B cell (primary cell): ENCODE measurements at regions of chr5 and their contacts with region 1.

Region 1: DNA sequence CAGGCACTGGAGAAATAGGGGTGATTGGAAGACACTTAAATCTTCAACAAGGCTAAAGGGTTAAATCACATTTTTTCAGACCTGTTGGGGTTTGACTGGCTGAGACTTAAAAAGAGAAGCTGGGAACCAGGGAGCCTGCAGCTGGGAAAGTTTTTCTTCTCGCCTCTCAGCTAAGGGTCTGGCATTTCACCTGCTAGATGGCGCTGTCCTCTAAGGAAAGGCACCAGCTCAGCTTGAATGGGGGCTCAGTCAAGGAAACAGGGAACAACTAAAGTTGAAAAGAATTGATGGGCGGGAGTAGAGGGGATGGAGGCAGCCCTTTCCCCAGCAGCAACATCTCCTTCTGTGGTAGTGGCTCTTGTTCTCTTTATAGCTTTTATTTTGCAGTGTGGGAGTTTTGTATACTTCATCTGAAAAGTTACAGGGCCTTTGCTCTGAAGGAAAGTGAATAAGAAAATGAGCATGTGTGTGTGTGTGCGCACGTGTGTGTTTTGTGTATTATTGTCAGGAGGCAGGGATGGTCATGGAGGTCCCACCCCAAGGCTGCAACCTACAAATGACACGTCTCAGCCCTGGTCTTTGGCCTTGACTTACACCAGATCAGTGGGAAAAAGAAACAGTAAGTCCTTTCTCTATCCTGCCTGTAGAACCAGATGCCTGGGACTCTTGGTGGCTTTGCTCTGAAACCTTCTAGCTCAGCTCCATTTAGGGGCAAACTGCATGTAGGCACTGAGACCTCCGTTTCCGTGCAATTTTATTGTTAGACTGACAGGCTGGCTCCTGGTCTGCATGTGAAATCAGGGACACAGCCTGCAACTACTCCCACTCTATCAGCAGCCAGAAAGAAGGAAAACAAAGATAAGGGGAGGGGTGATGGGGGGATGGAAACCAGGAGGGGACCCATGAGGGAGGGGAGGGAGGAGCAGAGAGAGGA is 316.2 kb upstream of the CLINT1 start:
- DNase-seq: peak; percentile 82
- ATAC-seq: peak; percentile 88
- H3K4me3 ChIP-seq: no peak overlapping the region
- H3K4me3 Mint-ChIP-seq: no peak overlapping the region
- H3K27ac ChIP-seq: no peak overlapping the region
- H3K27ac Mint-ChIP-seq: no peak overlapping the region
- H3K4me1 ChIP-seq: peaks cover 22 to 34% of the 10 kb centered on the region in 2 donors
- H3K4me1 Mint-ChIP-seq: peaks cover 30% of the 10 kb centered on the region
- H3K27me3 ChIP-seq: no peaks in the 10 kb centered on the region
- H3K27me3 Mint-ChIP-seq: no peaks in the 10 kb centered on the region
- CTCF ChIP-seq: peak; percentile 82

Region 2: GRCh38 chr5:158226496-158226895 is 51.3 kb after region 1 on chr5:
- CTCF ChIA-PET with region 1: interaction called, 11 read pairs
- POLR2A ChIA-PET with region 1: no interaction called
- intact Hi-C with region 1: no loop called
- DNase-seq: no peak
- ATAC-seq: no peak
- H3K4me3 ChIP-seq: no peak overlapping the region
- H3K4me3 Mint-ChIP-seq: no peak overlapping the region
- H3K27ac ChIP-seq: no peak overlapping the region
- H3K27ac Mint-ChIP-seq: no peak overlapping the region
- H3K4me1 ChIP-seq: peaks cover 5 to 7% of the 10 kb centered on the region in 2 donors
- H3K4me1 Mint-ChIP-seq: peaks cover 6% of the 10 kb centered on the region
- H3K27me3 ChIP-seq: peaks cover 0 to 2% (median 0%) of the 10 kb centered on the region in 4 experiments
- H3K27me3 Mint-ChIP-seq: no peaks in the 10 kb centered on the region
- CTCF ChIP-seq: no peak

Region 3: GRCh38 chr5:158470764-158471534 is 295.8 kb after region 1 on chr5:
- CTCF ChIA-PET with region 1: no interaction called
- POLR2A ChIA-PET with region 1: no interaction called
- intact Hi-C with region 1: no loop called
- DNase-seq: no peak
- ATAC-seq: no peak
- H3K4me3 ChIP-seq: no peak overlapping the region
- H3K4me3 Mint-ChIP-seq: no peak overlapping the region
- H3K27ac ChIP-seq: no peak overlapping the region
- H3K27ac Mint-ChIP-seq: no peak overlapping the region
- H3K4me1 ChIP-seq: peaks cover 0 to 7% of the 10 kb centered on the region in 2 donors
- H3K4me1 Mint-ChIP-seq: peaks cover 11% of the 10 kb centered on the region
- H3K27me3 ChIP-seq: no peaks in the 10 kb centered on the region
- H3K27me3 Mint-ChIP-seq: no peaks in the 10 kb centered on the region
- CTCF ChIP-seq: no peak

Region 4: GRCh38 chr5:158676642-158677469 is 501.7 kb after region 1 on chr5:
- CTCF ChIA-PET with region 1: interaction called, 16 read pairs
- POLR2A ChIA-PET with region 1: no interaction called
- intact Hi-C with region 1: no loop called
- DNase-seq: peak; percentile 62
- ATAC-seq: peak; percentile 76
- H3K4me3 ChIP-seq: peak overlapping the region; percentile 15 to 48 (median 41)
- H3K4me3 Mint-ChIP-seq: peak overlapping the region; percentile 76
- H3K27ac ChIP-seq: peak overlapping the region; percentile 62 to 89
- H3K27ac Mint-ChIP-seq: peak overlapping the region; percentile 87
- H3K4me1 ChIP-seq: peaks cover 22 to 28% of the 10 kb centered on the region in 2 donors
- H3K4me1 Mint-ChIP-seq: peaks cover 28% of the 10 kb centered on the region
- H3K27me3 ChIP-seq: no peaks in the 10 kb centered on the region
- H3K27me3 Mint-ChIP-seq: no peaks in the 10 kb centered on the region
- CTCF ChIP-seq: peak; percentile 8

Region 5: DNA sequence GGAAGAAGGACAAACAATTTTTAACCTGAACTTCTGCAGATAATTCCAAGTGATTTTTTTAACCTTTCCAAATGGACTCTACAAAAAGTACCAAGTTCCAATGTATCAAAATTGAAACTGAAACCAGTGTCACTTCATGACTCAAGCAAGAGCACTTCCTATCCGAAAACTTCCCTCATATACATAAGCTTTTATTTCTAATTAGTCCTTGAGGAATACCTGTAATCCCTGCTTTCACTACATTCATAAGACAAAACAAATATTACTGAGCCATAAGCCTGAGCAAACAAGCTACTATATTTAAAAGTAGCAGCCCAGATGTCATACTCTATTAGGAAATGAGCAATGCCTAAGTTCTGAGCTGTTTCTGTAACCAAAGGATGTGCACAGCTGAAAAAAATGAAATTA is 700.1 kb after region 1 on chr5:
- CTCF ChIA-PET with region 1: interaction called, 3 read pairs
- POLR2A ChIA-PET with region 1: no interaction called
- intact Hi-C with region 1: loop called (anchors 10 kb)
- DNase-seq: peak; percentile 70
- ATAC-seq: peak; percentile 41
- H3K4me3 ChIP-seq: peak overlapping the region in 2 of 5 experiments; percentile 12 to 34
- H3K4me3 Mint-ChIP-seq: peak overlapping the region; percentile 84
- H3K27ac ChIP-seq: peak overlapping the region; percentile 74 to 80
- H3K27ac Mint-ChIP-seq: peak overlapping the region; percentile 76
- H3K4me1 ChIP-seq: peaks cover 71 to 81% of the 10 kb centered on the region in 2 donors
- H3K4me1 Mint-ChIP-seq: peaks cover 89% of the 10 kb centered on the region
- H3K27me3 ChIP-seq: no peaks in the 10 kb centered on the region
- H3K27me3 Mint-ChIP-seq: no peaks in the 10 kb centered on the region
- CTCF ChIP-seq: no peak